AG04450 (cell line): ENCODE measurements at regions of chr15 and their contacts with region 1.

Region 1: GRCh38 chr15:91271565-91272153 is 171.6 kb downstream of the SV2B start:
- DNase-seq: peak; percentile 29
- H3K4me3 ChIP-seq: no peak overlapping the region
- H3K27ac ChIP-seq: no peak overlapping the region
- H3K27me3 ChIP-seq: no peaks in the 10 kb centered on the region
- CTCF ChIP-seq: peak; percentile 78

Region 2: GRCh38 chr15:91049378-91050127 is 222.1 kb before region 1 on chr15:
- CTCF ChIA-PET with region 1: interaction called, 148 read pairs
- POLR2A ChIA-PET with region 1: no interaction called
- DNase-seq: peak; percentile 38
- H3K4me3 ChIP-seq: no peak overlapping the region
- H3K27ac ChIP-seq: no peak overlapping the region
- H3K27me3 ChIP-seq: peaks cover 8% of the 10 kb centered on the region
- CTCF ChIP-seq: peak; percentile 84

Region 3: DNA sequence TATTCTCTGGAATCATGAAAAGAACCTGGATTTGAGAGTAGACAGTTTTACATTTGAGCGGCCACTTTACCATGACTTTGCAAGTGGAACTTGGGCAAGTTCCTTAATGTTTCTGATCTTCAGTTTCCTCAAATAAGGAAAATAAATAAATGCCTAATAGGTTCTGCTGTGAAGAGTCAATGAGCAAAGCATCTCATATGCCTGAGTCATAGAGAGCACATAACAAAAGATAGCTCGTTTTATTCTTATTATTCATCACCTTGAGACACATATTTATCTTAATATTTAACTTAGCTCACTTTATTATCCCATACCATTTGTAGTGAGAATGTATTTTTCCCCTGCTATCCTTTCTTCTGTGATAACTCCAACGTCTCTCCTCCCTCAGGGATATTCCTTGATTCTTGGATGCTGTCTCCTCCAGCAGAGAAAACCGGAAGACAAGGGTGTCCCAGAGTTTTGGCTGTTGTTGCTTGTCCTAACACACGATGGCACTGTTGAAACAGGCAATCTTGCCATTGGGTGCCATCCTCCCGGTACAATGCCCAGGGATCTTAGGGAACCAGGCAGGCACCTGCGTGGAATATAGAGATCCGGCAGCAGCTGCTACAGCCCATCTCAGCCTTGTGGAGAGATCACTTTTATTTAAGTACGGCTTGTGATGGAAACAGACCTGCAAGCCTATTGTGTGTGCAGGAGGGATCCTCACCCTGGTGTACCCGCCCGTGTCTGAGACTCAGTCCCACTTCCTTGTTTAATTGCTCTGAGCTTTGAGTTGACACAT is 215.9 kb before region 1 on chr15:
- CTCF ChIA-PET with region 1: interaction called, 148 read pairs
- POLR2A ChIA-PET with region 1: no interaction called
- DNase-seq: peak; percentile 11
- H3K4me3 ChIP-seq: no peak overlapping the region
- H3K27ac ChIP-seq: no peak overlapping the region
- H3K27me3 ChIP-seq: peaks cover 12% of the 10 kb centered on the region
- CTCF ChIP-seq: peak; percentile 73

Region 4: GRCh38 chr15:91219206-91219605 is 52.5 kb before region 1 on chr15:
- CTCF ChIA-PET with region 1: no interaction called
- POLR2A ChIA-PET with region 1: no interaction called
- DNase-seq: no peak
- H3K4me3 ChIP-seq: no peak overlapping the region
- H3K27ac ChIP-seq: no peak overlapping the region
- H3K27me3 ChIP-seq: peaks cover 2% of the 10 kb centered on the region
- CTCF ChIP-seq: no peak

Region 5: GRCh38 chr15:91258425-91258779 is 13.3 kb before region 1 on chr15:
- CTCF ChIA-PET with region 1: interaction called, 15 read pairs
- POLR2A ChIA-PET with region 1: no interaction called
- DNase-seq: no peak
- H3K4me3 ChIP-seq: no peak overlapping the region
- H3K27ac ChIP-seq: no peak overlapping the region
- H3K27me3 ChIP-seq: no peaks in the 10 kb centered on the region
- CTCF ChIP-seq: 0 out of 2 replicates have a peak, but pooled peaks have one; percentile 4

Region 6: DNA sequence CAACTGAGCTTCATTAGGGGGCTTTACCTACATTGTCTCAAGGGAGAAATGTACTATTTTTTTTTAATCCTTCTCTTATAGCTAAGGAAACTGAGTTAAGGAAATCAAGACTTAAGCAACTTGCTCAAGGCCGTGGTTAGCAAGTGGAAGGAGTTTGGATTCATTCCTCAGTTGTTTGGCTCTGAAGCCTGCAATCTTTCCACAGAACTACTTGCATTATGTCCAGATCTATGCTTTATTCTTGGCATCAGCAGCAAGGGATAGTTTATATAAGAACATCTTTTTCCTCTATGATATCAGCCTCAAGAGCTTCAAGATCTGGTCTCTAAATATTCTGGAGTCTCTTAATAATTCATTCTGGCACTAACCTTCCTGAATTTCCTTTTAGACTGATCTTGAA is 10.8 kb after region 1 on chr15:
- CTCF ChIA-PET with region 1: interaction called, 10 read pairs
- POLR2A ChIA-PET with region 1: no interaction called
- DNase-seq: no peak
- H3K4me3 ChIP-seq: no peak overlapping the region
- H3K27ac ChIP-seq: no peak overlapping the region
- H3K27me3 ChIP-seq: no peaks in the 10 kb centered on the region
- CTCF ChIP-seq: no peak

Region 7: GRCh38 chr15:91302588-91303439 is 31.2 kb after region 1 on chr15:
- CTCF ChIA-PET with region 1: interaction called, 13 read pairs
- POLR2A ChIA-PET with region 1: no interaction called
- DNase-seq: peak; percentile 30
- H3K4me3 ChIP-seq: no peak overlapping the region
- H3K27ac ChIP-seq: no peak overlapping the region
- H3K27me3 ChIP-seq: peaks cover 5% of the 10 kb centered on the region
- CTCF ChIP-seq: peak; percentile 81